ENCODE measurements at regions of chr6 and their contacts with region 1.

Region 1: DNA sequence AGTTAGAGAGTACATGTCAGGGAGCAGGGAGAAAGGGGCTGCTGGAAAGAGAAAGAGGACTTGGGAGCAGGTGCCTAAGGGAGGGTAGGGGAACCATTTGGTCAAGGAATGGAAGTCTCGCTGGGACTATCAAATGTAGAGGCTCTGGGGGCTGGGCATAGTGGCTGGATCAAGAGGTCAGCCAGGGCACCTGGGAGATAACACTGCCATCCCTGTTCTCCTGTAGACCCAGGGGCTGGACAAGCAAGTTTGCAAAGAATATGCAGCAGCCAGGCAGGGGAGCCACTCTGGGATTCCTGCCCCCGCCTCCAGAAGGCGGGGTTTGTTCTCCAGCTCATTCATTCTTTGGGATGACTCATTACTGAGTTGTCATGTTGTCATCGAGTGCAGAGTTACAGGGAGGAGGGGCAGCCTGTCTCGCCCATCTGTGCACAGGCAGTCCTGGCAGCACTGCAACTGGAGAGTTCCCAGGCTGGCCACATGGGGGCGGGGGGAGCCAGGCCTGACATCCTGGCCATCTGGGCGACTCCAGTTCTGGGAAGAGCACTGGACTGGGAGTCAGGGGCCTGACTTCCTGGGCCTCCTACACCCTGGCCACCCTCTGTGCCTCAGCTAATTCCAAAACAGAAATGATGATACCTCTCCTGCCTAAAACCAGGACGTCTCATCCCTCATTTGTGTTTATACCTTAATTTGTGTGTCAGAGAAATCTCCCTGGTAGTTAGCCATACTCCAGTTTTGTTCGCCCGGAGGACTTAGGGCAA is 28.2 kb upstream of the ZFAND3 start:
- DNase-seq: peak; percentile 92
- H3K4me3 Mint-ChIP-seq: no peak overlapping the region
- H3K27ac Mint-ChIP-seq: no peak overlapping the region
- H3K4me1 Mint-ChIP-seq: peaks cover 13% of the 10 kb centered on the region
- H3K27me3 Mint-ChIP-seq: peaks cover 9% of the 10 kb centered on the region

Region 2: GRCh38 chr6:37819177-37819823 is 28.0 kb after region 1 on chr6 and contains the start of gene ZFAND3:
- intact Hi-C with region 1: loop called (anchors 1 kb)
- DNase-seq: peak; percentile 98
- H3K4me3 Mint-ChIP-seq: peak within 1 kb of the TSS; percentile 99
- H3K27ac Mint-ChIP-seq: peak within 1 kb of the TSS; percentile 97
- H3K4me1 Mint-ChIP-seq: peaks cover 31% of the 10 kb centered on the region
- H3K27me3 Mint-ChIP-seq: peaks cover 5% of the 10 kb centered on the region
- total RNA-seq, gene ZFAND3: 31.5 and 39.6 TPM in 2 replicates

Region 3: DNA sequence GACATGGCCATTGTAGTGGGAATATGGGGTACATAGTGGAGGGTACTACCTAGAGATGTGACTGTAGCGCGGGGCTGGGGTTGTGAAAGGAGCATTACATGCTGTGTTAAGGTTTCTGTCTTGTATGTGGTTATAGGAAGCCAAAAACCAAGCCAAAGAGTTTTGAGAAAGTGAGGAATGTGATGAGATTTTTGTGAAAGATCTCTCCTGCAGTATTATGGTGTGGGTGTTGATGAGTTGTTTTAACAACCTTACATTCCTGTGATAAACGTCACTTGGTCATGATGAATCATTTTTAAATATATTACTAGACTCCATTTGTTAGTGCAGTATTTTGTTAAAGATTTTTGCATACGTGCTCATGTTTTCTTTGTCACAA is 77.1 kb after region 1 on chr6:
- intact Hi-C with region 1: loop called (anchors 1 kb)
- DNase-seq: no peak
- H3K4me3 Mint-ChIP-seq: peak overlapping the region; percentile 53
- H3K27ac Mint-ChIP-seq: peak overlapping the region; percentile 72
- H3K4me1 Mint-ChIP-seq: peaks cover 35% of the 10 kb centered on the region
- H3K27me3 Mint-ChIP-seq: no peaks in the 10 kb centered on the region

Region 4: DNA sequence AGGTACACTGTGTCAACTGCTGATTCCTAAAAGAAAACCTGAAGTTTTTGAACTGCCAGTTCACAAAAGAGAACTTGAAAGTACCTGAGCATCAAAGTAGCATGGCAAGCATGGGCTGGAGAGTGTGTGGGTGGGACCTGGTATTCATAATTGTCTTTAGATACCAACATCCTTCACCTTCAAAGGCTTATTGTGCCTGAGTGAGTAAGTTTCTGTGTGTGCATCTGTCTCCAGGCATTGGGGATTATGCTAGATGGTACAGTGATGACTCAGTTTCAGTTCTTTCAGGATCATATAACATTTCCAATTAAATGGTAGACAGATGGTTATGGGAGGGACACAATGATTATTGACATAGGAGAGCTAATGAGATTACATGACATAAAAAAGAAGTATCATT is 266.7 kb after region 1 on chr6:
- intact Hi-C with region 1: loop called (anchors 1 kb)
- DNase-seq: peak; percentile 60
- H3K4me3 Mint-ChIP-seq: no peak overlapping the region
- H3K27ac Mint-ChIP-seq: no peak overlapping the region
- H3K4me1 Mint-ChIP-seq: peaks cover 13% of the 10 kb centered on the region
- H3K27me3 Mint-ChIP-seq: no peaks in the 10 kb centered on the region

Region 5: DNA sequence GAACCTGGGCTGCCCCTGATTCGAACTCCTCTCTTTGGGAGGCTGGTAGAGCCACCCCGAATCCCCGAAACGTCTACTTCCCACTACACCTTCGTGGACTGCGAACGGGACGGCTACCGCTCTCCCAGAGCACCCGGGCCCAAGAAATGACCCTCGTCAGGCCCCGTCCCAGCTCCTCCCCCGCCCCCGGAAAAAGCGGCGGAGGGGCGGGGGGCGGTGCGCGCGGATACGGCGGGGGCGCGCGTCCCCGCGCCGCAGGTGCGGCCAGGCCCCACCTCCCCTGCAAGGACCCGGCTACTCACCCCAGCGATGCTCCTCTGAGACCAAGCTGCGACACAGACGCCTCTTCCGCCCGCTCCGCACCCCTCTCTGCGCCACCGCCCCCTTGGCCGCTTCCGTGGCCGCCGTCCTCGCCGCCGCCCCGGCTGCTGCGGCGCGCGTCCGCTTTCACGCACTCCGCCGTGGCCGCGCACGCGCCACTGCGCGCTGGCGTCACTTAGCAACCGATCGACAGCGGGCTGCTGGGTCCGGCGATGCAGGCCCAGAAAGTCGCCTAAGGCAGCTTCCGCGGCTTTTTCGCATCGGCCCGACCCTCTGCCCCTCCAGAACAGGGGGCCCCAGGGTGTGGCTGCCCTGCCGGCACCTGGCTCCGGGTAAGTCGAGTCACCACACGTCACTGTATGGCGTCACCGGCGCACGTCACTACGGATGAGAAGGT is 848.3 kb after region 1 on chr6 and contains the start of gene BTBD9:
- intact Hi-C with region 1: loop called (anchors 10 kb)
- DNase-seq: peak; percentile 96
- H3K4me3 Mint-ChIP-seq: peak within 1 kb of the TSS; percentile 90
- H3K27ac Mint-ChIP-seq: peak within 1 kb of the TSS; percentile 88
- H3K4me1 Mint-ChIP-seq: peaks cover 38% of the 10 kb centered on the region
- H3K27me3 Mint-ChIP-seq: no peaks in the 10 kb centered on the region
- total RNA-seq, gene BTBD9: 12.3 and 12.4 TPM in 2 replicates